ENCODE measurements at regions of chr7 and their contacts with region 1.

Region 1: DNA sequence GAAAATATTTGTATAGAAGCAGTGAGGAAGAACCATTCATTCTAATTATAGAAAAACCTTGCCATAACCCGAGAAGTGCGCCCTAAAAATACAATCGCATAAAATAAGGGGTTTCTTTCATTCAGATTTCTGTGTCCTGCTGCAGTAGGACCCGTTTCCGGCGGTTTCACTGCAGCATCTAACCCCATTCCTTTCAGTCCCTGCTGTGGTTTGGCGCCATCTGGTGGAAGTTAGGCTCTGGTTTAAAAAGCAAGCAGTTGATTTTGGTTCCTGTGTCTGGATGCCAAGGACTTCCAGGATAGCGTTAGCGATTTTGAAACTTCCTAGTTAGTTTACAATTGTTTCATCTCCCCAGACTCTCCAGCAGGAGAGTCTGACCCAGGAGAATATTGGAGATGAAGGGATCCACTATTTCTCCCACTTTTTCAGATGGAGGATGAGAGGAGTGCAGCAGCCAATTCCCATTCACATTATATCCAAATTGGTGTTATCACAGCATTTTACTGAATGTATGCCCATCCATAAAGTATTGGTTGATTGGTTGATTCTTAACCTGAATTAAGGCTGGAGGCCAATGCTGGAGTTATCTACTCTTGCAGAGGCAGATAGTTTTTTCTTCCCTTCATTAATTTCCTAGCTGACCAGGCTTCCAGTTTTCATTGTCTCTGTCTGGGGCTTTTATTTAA is 128.8 kb upstream of the CACNA2D1 start:
- DNase-seq: peak; percentile 69 to 90
- ATAC-seq: peak; percentile 76

Region 2: GRCh38 chr7:82044497-82045080 is 527.7 kb before region 1 on chr7:
- intact Hi-C with region 1: loop called in 1 of 2 experiments (anchors 5 kb)
- DNase-seq: peak in 1 of 2 donors; percentile 7
- ATAC-seq: no peak

Region 3: DNA sequence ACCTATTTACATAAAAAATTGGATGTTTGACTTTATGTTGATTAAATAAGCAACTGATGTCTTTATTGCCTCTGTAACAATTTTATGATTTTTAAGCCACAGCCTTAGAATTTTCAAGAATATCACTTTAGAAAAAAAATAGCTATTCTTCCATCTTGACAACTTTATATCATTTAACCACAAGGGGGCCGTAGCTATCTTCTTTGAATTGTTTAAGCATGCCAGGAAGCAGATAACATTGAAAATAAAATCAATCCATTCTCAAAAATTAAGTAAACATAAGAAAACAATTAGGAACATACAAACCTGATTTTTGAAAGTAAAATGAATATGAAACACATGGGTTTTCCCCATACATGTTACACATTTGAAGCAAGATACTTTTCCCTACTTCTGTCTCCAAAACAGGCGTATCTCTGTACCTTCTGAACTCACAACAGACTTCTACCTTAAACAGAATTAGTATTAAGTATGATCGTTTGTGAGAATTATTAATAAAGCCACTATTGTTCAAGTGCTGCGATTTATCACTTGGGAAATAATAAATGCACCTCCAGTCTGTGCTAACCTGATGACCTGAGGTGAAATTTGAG is 337.8 kb before region 1 on chr7:
- intact Hi-C with region 1: loop called in 1 of 2 experiments (anchors 10 kb)
- DNase-seq: no peak
- ATAC-seq: no peak